ENCODE measurements at regions of chr3 and their contacts with region 1.

Region 1: GRCh38 chr3:42547401-42547945 is 34.3 kb downstream of the SEC22C start:
- DNase-seq: peak; percentile 37
- H3K4me3 Mint-ChIP-seq: no peak overlapping the region
- H3K27ac Mint-ChIP-seq: no peak overlapping the region
- H3K4me1 Mint-ChIP-seq: peaks cover 3% of the 10 kb centered on the region
- H3K27me3 Mint-ChIP-seq: no peaks in the 10 kb centered on the region

Region 2: GRCh38 chr3:42247576-42248027 is 299.9 kb before region 1 on chr3:
- intact Hi-C with region 1: loop called (anchors 5 kb)
- DNase-seq: peak; percentile 46
- H3K4me3 Mint-ChIP-seq: no peak overlapping the region
- H3K27ac Mint-ChIP-seq: no peak overlapping the region
- H3K4me1 Mint-ChIP-seq: peaks cover 7% of the 10 kb centered on the region
- H3K27me3 Mint-ChIP-seq: peaks cover 35% of the 10 kb centered on the region

Region 3: DNA sequence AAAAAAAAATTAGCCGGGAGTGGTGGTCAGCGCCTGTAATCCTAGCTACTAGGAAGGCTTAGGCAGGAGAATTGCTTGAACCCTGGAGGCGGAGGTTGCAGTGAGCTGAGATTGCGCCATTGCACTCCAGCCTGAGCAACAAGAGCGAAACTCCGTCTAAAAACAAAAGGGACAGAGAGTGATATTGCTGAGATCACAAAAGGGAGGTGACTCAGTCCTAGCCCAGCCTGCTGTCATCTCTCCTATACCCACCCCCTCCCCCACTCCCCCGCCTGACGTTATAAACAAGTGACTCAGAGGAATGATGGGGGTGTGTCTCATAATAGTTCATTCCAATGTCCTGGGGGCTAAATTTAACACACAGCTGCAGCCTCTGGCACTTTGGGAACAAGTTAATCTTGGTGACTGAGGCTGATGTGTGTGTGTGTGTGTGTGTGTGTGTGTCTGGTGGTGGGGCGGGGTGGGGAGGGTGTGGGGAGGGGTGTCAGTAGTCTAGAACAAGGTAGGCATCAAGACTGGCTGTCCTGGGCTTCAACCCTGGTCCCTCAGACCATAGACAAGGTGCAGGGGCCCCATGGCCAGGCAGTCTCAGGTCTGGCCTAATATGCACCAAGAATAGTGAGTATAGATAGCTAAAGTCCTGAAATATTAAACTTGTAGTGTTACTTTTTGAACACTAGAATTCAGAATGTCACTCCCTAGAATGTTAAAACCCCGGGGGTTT is 136.6 kb after region 1 on chr3:
- intact Hi-C with region 1: no loop called
- DNase-seq: no peak
- H3K4me3 Mint-ChIP-seq: no peak overlapping the region
- H3K27ac Mint-ChIP-seq: no peak overlapping the region
- H3K4me1 Mint-ChIP-seq: peaks cover 16% of the 10 kb centered on the region
- H3K27me3 Mint-ChIP-seq: peaks cover 14% of the 10 kb centered on the region

Measured in activated T-helper 2 cell treated with anti-CD3 and anti-CD28 coated beads, Interferon-gamma antibody, Interleukin-2, Interleukin-4, amounts not matched to agents 10 μg/mL and 5 μg/mL and 100 μg/mL, durations not matched to agents 14 hours and 24 hours and 36 hours (primary cell).